ENCODE measurements at regions of chr20 and their contacts with region 1.

Region 1: DNA sequence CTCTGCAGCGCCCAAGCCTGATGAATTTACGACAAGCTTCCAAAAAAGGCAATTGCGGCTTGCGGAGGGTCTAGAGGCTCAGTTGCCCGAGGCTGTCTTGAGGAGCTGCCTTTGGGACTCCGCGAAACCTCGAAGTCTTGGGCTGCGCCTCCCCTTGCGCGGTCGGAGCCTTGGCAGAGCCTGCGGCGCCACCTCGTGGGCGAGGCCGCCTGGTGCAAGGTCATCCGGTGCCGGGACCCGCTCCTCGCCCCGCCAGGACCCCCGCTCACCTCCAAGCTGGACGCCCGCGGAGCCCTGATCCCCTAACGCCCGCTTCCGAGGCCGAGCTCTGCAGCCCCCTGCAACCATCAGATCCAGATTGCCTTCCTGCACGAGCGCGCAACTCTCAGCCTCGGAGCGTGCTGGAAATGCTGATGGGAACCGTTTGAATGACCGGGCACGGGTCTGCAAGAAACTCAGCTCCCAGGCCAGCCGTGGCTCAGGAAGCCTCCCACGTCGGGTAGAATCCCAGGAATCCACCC is 14.9 kb upstream of the FAM210B start:
- DNase-seq: no peak
- ATAC-seq: peak; percentile 96
- H3K4me3 ChIP-seq: peak overlapping the region in 1 of 2 experiments; percentile 33; a peak in 2 of 4 replicates
- H3K27ac ChIP-seq: no peak overlapping the region
- H3K4me1 ChIP-seq: no peaks in the 10 kb centered on the region; the same call in 1 of the 2 replicates
- H3K27me3 ChIP-seq: peaks cover 8% of the 10 kb centered on the region
- CTCF ChIP-seq: peak; percentile 89

Region 2: GRCh38 chr20:56202493-56203077 is 141.3 kb before region 1 on chr20:
- CTCF ChIA-PET with region 1: no interaction called
- POLR2A ChIA-PET with region 1: no interaction called
- in situ Hi-C with region 1: no loop called
- intact Hi-C with region 1: loop called (anchors 1 kb)
- DNase-seq: no peak
- ATAC-seq: peak; percentile 84
- H3K4me3 ChIP-seq: no peak overlapping the region
- H3K27ac ChIP-seq: no peak overlapping the region
- H3K4me1 ChIP-seq: no peaks in the 10 kb centered on the region
- H3K27me3 ChIP-seq: no peaks in the 10 kb centered on the region
- CTCF ChIP-seq: peak; percentile 74

Region 3: DNA sequence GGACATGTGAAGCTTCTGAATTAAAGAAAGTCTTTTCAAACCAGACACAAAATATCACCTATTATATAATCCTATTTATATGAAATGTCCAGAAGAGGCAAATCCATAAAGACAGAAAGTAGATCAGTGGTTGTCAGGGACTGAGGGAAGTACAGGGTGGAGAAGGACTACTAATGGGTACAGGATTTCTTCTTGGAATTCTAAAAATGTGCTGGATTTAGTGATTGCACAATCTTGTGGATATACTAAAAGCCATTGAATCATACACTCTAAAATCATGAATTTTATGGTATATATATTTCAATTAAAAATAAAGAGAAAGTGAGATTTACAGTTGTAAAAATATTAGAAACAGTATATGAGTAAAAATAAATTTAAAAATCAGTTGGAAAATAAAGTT is 114.1 kb before region 1 on chr20:
- CTCF ChIA-PET with region 1: no interaction called
- POLR2A ChIA-PET with region 1: no interaction called
- in situ Hi-C with region 1: no loop called
- intact Hi-C with region 1: no loop called
- DNase-seq: no peak
- ATAC-seq: no peak
- H3K4me3 ChIP-seq: no peak overlapping the region
- H3K27ac ChIP-seq: no peak overlapping the region
- H3K4me1 ChIP-seq: no peaks in the 10 kb centered on the region
- H3K27me3 ChIP-seq: no peaks in the 10 kb centered on the region; the same call in 1 of the 2 replicates
- CTCF ChIP-seq: no peak

Region 4: GRCh38 chr20:56247948-56248782 is 95.8 kb before region 1 on chr20 and contains the start of gene MC3R:
- CTCF ChIA-PET with region 1: interaction called, 4 read pairs
- POLR2A ChIA-PET with region 1: no interaction called
- in situ Hi-C with region 1: no loop called
- intact Hi-C with region 1: loop called (anchors 2 kb)
- DNase-seq: peak; percentile 30
- ATAC-seq: peak; percentile 91
- H3K4me3 ChIP-seq: no peak within 1 kb of the TSS
- H3K27ac ChIP-seq: no peak within 1 kb of the TSS
- H3K4me1 ChIP-seq: no peaks in the 10 kb centered on the region
- H3K27me3 ChIP-seq: peaks cover 5% of the 10 kb centered on the region
- CTCF ChIP-seq: peak; percentile 87
- total RNA-seq, gene MC3R: not detected

Measured in Panc1 (cell line).